Dendritic cell treated with granulocyte-macrophage colony-stimulating factor and Interleukin-4, amounts not matched to agents 40 ng/mL and 50 ng/mL, for 4 days (primary cell): ENCODE measurements at regions of chr1 and their contacts with region 1.

Region 1: DNA sequence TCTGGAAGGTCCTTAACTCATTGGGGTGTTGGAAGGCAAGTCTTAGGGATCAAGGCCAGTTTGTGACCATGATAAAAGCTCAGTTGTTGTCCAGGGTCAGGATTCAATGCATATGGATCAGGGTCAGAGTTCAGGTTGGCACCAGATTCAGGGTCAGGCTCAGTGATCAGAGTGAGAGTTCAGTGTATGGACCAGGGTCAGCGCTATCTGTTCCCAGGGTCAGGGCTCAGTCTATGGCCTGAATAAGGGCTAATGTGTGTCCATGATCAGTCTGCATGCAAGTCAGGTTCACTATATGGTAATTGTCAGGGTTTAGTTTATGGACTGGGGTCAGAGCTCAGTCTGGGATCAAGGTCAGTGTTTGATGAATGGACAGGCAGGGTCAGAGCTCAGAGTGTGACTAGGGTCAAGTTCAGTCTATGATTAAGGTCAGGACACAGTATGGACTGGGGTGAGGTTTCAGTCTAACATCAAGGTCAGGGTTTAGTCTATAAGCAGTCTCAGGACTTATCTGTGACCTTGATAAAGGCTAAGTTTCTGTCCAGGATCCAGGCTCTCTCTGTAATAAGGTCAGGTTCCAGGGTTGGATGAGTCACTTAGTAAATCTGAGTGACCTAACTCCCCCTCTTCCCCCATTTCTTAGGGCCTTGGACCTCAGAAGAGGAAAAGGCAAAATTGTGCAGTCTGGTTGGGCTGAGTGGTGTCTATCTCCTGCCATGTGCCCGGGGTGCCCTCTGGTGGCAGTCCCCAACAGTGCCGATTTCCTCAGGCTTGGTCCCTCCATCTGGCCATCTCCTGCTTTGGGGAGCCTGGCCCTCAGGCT is 23.8 kb downstream of the KNCN start:
- H3K4me3 Mint-ChIP-seq: no peak overlapping the region
- H3K27ac Mint-ChIP-seq: no peak overlapping the region
- H3K4me1 Mint-ChIP-seq: peaks cover 11% of the 10 kb centered on the region
- H3K27me3 Mint-ChIP-seq: peaks cover 76% of the 10 kb centered on the region

Region 2: DNA sequence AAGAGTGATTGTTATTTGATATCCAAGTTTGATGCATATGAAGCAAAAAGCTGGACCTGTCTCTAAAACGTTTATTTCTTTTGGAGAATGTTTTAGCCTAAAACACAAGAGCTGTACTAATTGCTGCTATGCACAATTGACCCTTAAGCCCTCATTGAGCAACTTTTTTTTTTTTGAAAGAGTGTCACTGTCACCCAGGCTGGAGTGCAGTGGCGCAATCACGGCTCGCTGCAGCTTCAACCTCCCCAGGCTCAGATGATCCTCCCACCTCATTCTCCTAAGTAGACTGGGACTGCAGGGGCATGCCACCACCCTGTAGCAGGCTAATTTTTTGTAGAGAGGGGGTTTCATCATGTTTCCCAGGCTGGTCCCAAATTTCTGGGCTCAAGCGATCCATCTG is 524.4 kb before region 1 on chr1:
- intact Hi-C with region 1: no loop called
- H3K4me3 Mint-ChIP-seq: no peak overlapping the region
- H3K27ac Mint-ChIP-seq: no peak overlapping the region
- H3K4me1 Mint-ChIP-seq: peaks cover 35% of the 10 kb centered on the region
- H3K27me3 Mint-ChIP-seq: no peaks in the 10 kb centered on the region

Region 3: GRCh38 chr1:46333300-46334029 is 194.2 kb before region 1 on chr1:
- intact Hi-C with region 1: loop called (anchors 5 kb)
- H3K4me3 Mint-ChIP-seq: no peak overlapping the region
- H3K27ac Mint-ChIP-seq: no peak overlapping the region
- H3K4me1 Mint-ChIP-seq: peaks cover 6% of the 10 kb centered on the region
- H3K27me3 Mint-ChIP-seq: no peaks in the 10 kb centered on the region

Region 4: DNA sequence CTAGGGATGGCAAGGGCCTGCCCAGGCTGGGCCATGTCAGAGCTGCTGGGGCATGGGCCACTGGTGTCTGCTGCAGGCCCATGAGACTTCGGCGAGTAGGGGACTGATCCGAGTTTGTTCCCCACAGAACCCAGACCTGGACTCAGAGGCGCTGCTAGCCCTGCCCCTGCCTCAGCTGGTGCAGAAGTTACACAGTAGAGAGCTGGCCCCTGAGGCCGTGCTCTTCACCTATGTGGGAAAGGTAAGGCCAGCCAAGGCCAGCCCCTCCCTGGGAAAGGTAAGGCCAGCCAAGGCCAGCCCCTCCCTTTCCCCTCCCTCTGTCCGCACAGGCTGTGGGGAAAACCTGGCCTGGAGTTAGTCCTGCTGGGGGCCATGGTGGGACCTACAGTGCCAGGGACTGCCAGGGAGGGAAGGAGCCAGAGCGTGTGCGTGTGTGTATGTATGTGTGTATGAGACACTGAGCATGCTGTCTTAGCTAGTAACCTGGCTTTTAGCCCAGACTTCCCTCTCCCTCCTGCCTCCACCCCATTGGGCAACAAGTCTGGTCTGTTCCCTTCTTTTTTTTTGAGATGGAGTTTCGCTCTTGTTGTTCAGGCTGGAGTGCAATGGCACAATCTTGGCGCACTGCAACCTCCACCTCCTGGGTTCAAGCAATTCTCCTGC is 125.6 kb before region 1 on chr1:
- intact Hi-C with region 1: loop called (anchors 1 kb)
- H3K4me3 Mint-ChIP-seq: no peak overlapping the region
- H3K27ac Mint-ChIP-seq: no peak overlapping the region
- H3K4me1 Mint-ChIP-seq: peaks cover 61% of the 10 kb centered on the region
- H3K27me3 Mint-ChIP-seq: peaks cover 2% of the 10 kb centered on the region

Region 5: GRCh38 chr1:46442317-46443161 is 85.1 kb before region 1 on chr1:
- intact Hi-C with region 1: loop called (anchors 1 kb)
- H3K4me3 Mint-ChIP-seq: peak overlapping the region; percentile 65
- H3K27ac Mint-ChIP-seq: peak overlapping the region; percentile 80
- H3K4me1 Mint-ChIP-seq: peaks cover 57% of the 10 kb centered on the region
- H3K27me3 Mint-ChIP-seq: peaks cover 33% of the 10 kb centered on the region

Region 6: DNA sequence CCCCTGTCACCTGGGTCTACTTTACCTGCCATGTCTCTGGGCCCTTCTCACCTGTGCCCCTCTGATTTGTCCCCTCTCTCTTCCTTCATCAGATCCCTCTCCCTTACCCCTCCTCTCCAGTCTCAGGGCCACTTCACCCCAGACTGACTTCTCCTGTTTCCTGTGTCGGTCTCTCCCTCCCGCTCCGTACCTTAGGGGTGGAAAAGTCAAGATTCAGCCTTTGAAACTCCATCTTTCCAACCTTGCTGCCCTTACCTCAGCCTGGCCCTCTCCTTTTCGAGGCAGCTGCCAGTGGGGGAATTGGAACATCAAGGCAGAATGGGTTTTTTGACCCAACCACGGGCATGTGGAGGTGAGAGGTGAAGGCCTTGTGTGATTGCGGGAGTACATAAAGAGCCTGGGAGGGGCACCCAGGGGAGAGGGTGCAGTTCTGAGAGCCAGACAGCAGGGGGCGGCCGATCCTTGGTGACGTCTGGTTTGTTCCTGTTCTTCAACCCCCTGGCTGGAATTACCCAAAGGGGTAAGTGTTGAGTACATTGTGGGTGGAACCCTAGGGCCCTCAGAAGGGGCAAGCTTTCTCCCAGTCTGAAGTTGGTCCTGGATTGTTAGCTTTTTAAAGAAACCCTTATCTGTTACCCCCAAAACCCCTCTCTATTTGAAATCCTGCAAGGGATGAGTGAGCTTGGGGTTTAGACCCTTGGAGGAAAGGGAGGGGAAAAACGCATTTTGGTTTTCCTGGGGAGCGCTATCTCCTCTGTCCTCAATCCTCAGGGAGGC is 50.3 kb before region 1 on chr1:
- intact Hi-C with region 1: loop called (anchors 1 kb)
- H3K4me3 Mint-ChIP-seq: no peak overlapping the region
- H3K27ac Mint-ChIP-seq: no peak overlapping the region
- H3K4me1 Mint-ChIP-seq: no peaks in the 10 kb centered on the region
- H3K27me3 Mint-ChIP-seq: peaks cover 59% of the 10 kb centered on the region

Region 7: GRCh38 chr1:46623743-46624644 is 96.3 kb after region 1 on chr1:
- intact Hi-C with region 1: no loop called
- H3K4me3 Mint-ChIP-seq: no peak overlapping the region
- H3K27ac Mint-ChIP-seq: no peak overlapping the region
- H3K4me1 Mint-ChIP-seq: peaks cover 38% of the 10 kb centered on the region
- H3K27me3 Mint-ChIP-seq: no peaks in the 10 kb centered on the region

Region 8: DNA sequence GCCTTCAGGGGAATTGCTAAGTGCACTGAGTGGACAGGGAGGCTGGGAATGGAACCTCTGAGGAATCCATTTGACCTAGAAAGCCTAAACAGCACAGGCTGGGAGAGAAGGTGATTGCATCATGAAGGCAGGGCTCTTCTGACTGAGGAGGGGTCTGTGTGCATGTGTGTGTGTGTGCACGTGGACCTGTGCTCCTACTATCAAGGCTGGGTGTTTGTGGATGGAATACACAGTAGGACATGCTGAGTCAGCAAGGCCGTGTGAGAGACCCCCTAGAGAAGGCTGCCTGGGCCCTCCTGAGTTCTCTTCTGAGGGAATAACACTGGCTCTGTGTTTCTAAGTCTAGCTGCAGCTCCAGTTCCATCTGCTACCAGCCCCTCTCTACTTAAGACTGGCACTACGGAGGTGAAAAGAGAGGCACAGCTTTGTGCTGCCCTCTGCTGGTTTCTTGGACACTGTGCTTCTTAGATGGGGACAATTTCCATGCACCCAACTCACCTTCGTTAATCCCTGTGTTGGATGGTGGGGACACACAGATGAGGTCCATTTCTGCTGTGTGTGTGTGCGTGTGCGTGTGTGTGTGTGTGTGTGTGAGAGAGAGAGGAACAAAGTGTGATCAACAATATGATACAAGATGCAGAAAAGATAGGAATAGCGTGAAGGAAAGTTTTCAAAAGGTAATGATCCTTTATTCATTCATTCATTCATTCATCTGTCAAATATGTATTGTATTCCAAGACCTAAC is 197.5 kb after region 1 on chr1:
- intact Hi-C with region 1: loop called (anchors 2 kb)
- H3K4me3 Mint-ChIP-seq: no peak overlapping the region
- H3K27ac Mint-ChIP-seq: no peak overlapping the region
- H3K4me1 Mint-ChIP-seq: peaks cover 7% of the 10 kb centered on the region
- H3K27me3 Mint-ChIP-seq: peaks cover 30% of the 10 kb centered on the region